PC-9 (cell line): ENCODE measurements at regions of chr17 and their contacts with region 1.

Region 1: DNA sequence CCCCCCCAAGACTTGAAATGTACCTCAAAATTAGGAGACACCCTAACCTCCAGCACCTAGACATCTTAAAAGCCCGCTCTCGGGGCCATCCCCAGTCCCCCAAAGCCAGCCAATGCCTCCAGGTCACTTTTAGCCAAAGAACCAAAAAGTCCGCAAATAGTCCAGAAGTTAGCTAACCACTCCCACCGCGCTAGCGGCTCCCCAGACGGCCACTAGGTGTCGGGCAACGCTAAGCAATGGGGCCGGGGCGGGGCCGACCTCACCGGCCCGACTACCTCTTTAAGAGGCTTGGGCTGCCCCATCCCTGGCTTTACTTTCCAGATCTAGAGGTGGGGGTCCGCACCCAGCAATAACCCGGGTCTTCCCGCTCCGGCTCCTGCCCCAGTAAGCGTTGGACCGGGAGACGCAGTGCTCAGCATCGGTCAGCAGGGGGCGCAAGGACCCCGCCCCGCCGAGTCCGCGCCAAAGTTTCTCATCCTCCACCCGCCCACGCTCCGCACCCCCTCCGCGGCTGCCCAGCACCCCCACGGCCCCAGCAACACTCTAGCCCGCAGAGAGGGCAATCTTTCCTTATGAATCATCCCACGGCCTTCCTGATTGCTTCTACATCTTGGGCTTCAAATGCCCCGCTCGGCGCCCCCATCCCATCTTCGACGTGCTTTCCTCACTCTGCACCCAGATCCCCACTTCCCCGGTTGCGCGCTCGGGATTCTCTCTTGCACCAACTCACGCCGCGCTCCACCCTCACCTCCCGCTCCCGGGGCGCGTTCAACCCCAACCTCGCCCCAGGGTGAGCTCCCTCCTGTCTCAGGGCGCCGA is 765 bp downstream of the COL1A1 start:
- DNase-seq: peak; percentile 76 to 91
- H3K4me3 ChIP-seq: peak overlapping the region; percentile 62; the same call in 1 of the 2 replicates
- H3K27ac ChIP-seq: 0 out of 2 replicates have a peak overlapping the region, but pooled peaks have one; percentile 84
- H3K4me1 ChIP-seq: peaks cover 22% of the 10 kb centered on the region
- H3K27me3 ChIP-seq: peaks cover 48% of the 10 kb centered on the region
- CTCF ChIP-seq: peak; percentile 100

Region 2: GRCh38 chr17:48908047-48908843 is 1292.4 kb before region 1 on chr17 and contains the start of gene UBE2Z:
- CTCF ChIA-PET with region 1: no interaction called
- POLR2A ChIA-PET with region 1: no interaction called
- intact Hi-C with region 1: no loop called
- DNase-seq: peak; percentile 85 to 86
- H3K4me3 ChIP-seq: peak within 1 kb of the TSS; percentile 89
- H3K27ac ChIP-seq: peak within 1 kb of the TSS; percentile 90
- H3K4me1 ChIP-seq: peaks cover 33% of the 10 kb centered on the region
- H3K27me3 ChIP-seq: no peaks in the 10 kb centered on the region
- CTCF ChIP-seq: 0 out of 2 replicates have a peak, but pooled peaks have one; percentile 16
- total RNA-seq, gene UBE2Z: 99.4 and 100.0 TPM in 2 replicates

Region 3: DNA sequence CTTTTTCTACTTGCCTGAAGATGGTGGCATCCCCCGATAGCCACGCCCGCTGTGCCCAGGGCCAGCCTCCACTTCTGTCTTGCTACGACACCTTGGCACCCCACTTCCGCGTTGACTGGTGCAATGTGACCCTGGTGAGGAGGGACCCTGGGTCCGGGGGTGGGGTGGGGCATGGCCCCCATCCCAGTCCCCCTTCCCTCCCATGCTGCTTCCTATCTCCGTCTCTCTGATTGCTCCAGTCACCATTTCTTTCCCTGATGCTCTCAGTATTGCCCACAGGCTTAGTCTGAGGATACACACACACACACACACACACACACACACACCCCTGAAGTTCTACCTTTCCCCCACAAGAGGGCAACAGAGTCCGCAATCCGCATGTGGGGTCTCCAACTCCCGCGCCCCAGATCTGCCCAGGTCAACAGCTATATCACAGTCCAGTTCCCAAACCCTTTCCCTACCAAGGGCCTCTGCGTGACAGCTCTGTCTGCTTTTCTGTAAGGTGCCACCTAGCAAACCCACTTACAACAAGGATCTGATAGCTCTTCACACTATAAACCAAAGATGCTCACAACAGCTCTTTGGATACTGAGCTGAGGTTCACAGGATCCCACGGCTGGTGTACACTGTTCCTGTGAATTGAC is 31.4 kb before region 1 on chr17:
- CTCF ChIA-PET with region 1: interaction called, 18 read pairs
- POLR2A ChIA-PET with region 1: no interaction called
- intact Hi-C with region 1: loop called (anchors 1 kb)
- DNase-seq: peak; percentile 54 to 69
- H3K4me3 ChIP-seq: no peak overlapping the region
- H3K27ac ChIP-seq: peak overlapping the region; percentile 28; the same call in 1 of the 2 replicates
- H3K4me1 ChIP-seq: peaks cover 22% of the 10 kb centered on the region
- H3K27me3 ChIP-seq: no peaks in the 10 kb centered on the region
- CTCF ChIP-seq: peak; percentile 96

Region 4: DNA sequence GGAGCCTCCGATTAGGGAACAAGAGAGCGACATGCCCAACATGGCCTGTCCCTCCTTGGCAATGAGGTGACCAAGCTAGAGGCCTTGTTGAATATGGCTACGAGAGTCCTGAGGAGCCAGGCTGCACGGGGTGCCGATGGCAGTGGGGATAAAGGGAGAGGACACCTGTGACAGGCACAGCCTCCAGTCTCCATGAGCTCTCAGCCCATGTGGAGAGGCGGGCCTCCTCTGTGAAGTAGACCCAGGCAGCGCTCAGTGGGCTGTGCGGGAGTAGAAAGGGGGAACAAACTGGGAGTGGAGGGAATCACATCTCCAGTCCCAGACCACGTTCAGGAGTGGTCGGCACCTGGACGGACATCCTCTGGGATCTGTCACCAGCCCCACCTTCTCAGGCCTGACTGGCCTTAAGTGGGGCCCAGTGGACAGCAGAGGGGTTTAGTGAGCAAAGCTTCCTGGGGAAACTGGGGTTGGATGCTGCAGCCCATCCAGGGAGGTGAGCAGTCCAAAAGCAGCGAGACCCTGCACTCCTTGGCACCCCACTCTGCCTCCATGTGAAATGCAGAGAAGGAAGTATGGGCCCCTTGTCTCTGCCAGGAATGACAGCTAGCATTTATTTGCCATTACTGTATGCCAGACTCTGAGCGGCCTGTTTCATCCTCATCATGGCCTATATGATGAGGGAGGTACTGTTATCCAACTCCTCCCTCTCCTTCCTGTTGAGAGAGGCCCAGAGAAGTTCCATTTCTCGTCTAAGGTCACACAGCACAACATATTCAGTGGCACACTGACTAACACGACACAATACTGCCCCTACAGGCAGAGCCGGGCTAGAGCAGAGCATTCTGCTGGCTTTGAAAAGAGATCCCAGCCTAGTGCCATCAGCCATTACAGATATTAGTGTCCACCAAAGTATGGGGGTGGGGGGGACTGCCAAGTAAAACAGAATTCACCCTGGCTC is 69.1 kb after region 1 on chr17:
- CTCF ChIA-PET with region 1: interaction called, 21 read pairs
- POLR2A ChIA-PET with region 1: no interaction called
- intact Hi-C with region 1: loop called (anchors 1 kb)
- DNase-seq: peak; percentile 46 to 59
- H3K4me3 ChIP-seq: no peak overlapping the region
- H3K27ac ChIP-seq: no peak overlapping the region
- H3K4me1 ChIP-seq: peaks cover 22% of the 10 kb centered on the region
- H3K27me3 ChIP-seq: no peaks in the 10 kb centered on the region; the same call in 1 of the 2 replicates
- CTCF ChIP-seq: peak; percentile 92

Region 5: DNA sequence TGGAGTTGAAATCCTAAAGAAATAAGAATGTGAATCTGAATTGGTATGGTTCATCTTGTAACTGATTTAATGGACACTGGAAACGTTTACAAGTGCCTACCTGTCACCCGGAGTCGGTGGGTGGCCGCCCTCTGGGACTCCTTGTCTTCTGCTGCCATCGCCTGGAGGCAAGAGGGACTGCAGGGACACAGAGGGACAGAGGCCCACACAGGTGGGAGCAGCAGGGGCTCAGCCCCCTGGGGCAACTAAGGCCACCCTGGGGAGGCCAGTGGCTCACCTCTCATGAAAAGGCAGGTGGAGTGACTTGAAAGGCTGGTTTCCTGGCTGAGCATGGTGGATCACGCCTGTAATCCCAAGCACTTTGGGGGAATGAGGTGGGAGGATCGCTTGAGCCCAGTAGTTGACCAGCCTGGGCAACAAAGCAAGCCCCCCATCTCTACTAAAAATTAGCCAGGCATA is 96.8 kb after region 1 on chr17:
- CTCF ChIA-PET with region 1: interaction called, 20 read pairs
- POLR2A ChIA-PET with region 1: no interaction called
- intact Hi-C with region 1: loop called (anchors 1 kb)
- DNase-seq: peak; percentile 47 to 81
- H3K4me3 ChIP-seq: no peak overlapping the region
- H3K27ac ChIP-seq: no peak overlapping the region
- H3K4me1 ChIP-seq: no peaks in the 10 kb centered on the region
- H3K27me3 ChIP-seq: no peaks in the 10 kb centered on the region
- CTCF ChIP-seq: peak; percentile 94

Region 6: GRCh38 chr17:50361561-50362480 is 161.2 kb after region 1 on chr17:
- CTCF ChIA-PET with region 1: no interaction called
- POLR2A ChIA-PET with region 1: no interaction called
- intact Hi-C with region 1: loop called (anchors 5 kb)
- DNase-seq: peak; percentile 46 to 56
- H3K4me3 ChIP-seq: no peak overlapping the region
- H3K27ac ChIP-seq: no peak overlapping the region
- H3K4me1 ChIP-seq: no peaks in the 10 kb centered on the region
- H3K27me3 ChIP-seq: no peaks in the 10 kb centered on the region
- CTCF ChIP-seq: peak; percentile 92

Region 7: GRCh38 chr17:50686494-50687199 is 486.0 kb after region 1 on chr17:
- CTCF ChIA-PET with region 1: no interaction called
- POLR2A ChIA-PET with region 1: no interaction called
- intact Hi-C with region 1: loop called (anchors 10 kb)
- DNase-seq: peak in 1 of 2 experiments; percentile 60
- H3K4me3 ChIP-seq: no peak overlapping the region
- H3K27ac ChIP-seq: peak overlapping the region; percentile 33; the same call in 1 of the 2 replicates
- H3K4me1 ChIP-seq: peaks cover 81% of the 10 kb centered on the region
- H3K27me3 ChIP-seq: no peaks in the 10 kb centered on the region
- CTCF ChIP-seq: no peak

Region 8: GRCh38 chr17:51387582-51387981 is 1186.9 kb after region 1 on chr17:
- CTCF ChIA-PET with region 1: no interaction called
- POLR2A ChIA-PET with region 1: no interaction called
- intact Hi-C with region 1: no loop called
- DNase-seq: no peak
- H3K4me3 ChIP-seq: no peak overlapping the region
- H3K27ac ChIP-seq: no peak overlapping the region
- H3K4me1 ChIP-seq: no peaks in the 10 kb centered on the region
- H3K27me3 ChIP-seq: peaks cover 96% of the 10 kb centered on the region
- CTCF ChIP-seq: no peak